Mammary epithelial cell (primary cell): ENCODE measurements at regions of chr1 and their contacts with region 1.

Region 1: GRCh38 chr1:40625066-40625465 is 40.4 kb downstream of the RIMS3 start:
- DNase-seq: peak; percentile 37
- H3K4me3 ChIP-seq: no peak overlapping the region
- H3K27ac ChIP-seq: no peak overlapping the region
- H3K4me1 ChIP-seq: peaks cover 33% of the 10 kb centered on the region
- H3K27me3 ChIP-seq: no peaks in the 10 kb centered on the region
- CTCF ChIP-seq: peak; percentile 43 to 76

Region 2: GRCh38 chr1:40650075-40650474 is 25.0 kb after region 1 on chr1:
- CTCF ChIA-PET with region 1: interaction called, 5 read pairs
- dilution Hi-C with region 1: no loop called
- in situ Hi-C with region 1: no loop called
- intact Hi-C with region 1: loop called (anchors 2 kb)
- DNase-seq: no peak
- H3K4me3 ChIP-seq: no peak overlapping the region
- H3K27ac ChIP-seq: no peak overlapping the region
- H3K4me1 ChIP-seq: peaks cover 16% of the 10 kb centered on the region
- H3K27me3 ChIP-seq: no peaks in the 10 kb centered on the region
- CTCF ChIP-seq: peak in 1 of 2 donors; percentile 29

Region 3: GRCh38 chr1:40668769-40669525 is 43.9 kb after region 1 on chr1:
- CTCF ChIA-PET with region 1: interaction called, 5 read pairs
- dilution Hi-C with region 1: no loop called
- in situ Hi-C with region 1: no loop called
- intact Hi-C with region 1: loop called (anchors 1 kb)
- DNase-seq: peak; percentile 57
- H3K4me3 ChIP-seq: no peak overlapping the region
- H3K27ac ChIP-seq: no peak overlapping the region
- H3K4me1 ChIP-seq: peaks cover 7% of the 10 kb centered on the region
- H3K27me3 ChIP-seq: no peaks in the 10 kb centered on the region
- CTCF ChIP-seq: peak; percentile 94 to 95

Region 4: GRCh38 chr1:40711465-40712404 is 86.7 kb after region 1 on chr1:
- CTCF ChIA-PET with region 1: interaction called, 3 read pairs
- dilution Hi-C with region 1: no loop called
- in situ Hi-C with region 1: no loop called
- intact Hi-C with region 1: loop called (anchors 2 kb)
- DNase-seq: peak; percentile 92
- H3K4me3 ChIP-seq: peak overlapping the region; percentile 64 to 83 (median 69)
- H3K27ac ChIP-seq: peak overlapping the region; percentile 55
- H3K4me1 ChIP-seq: peaks cover 44% of the 10 kb centered on the region
- H3K27me3 ChIP-seq: no peaks in the 10 kb centered on the region
- CTCF ChIP-seq: no peak